ENCODE measurements at regions of chr3 and their contacts with region 1.

Region 1: GRCh38 chr3:107543666-107544065 is 20.9 kb downstream of the BBX start:
- DNase-seq: no peak
- H3K4me3 ChIP-seq: no peak overlapping the region
- H3K27ac ChIP-seq: no peak overlapping the region
- H3K4me1 ChIP-seq: peaks cover 0 to 5% (median 3%) of the 10 kb centered on the region in 4 experiments; a peak in 2 of 7 replicates
- H3K27me3 ChIP-seq: no peaks in the 10 kb centered on the region
- CTCF ChIP-seq: peak in 2 of 3 experiments; percentile 20 to 25; a peak in 2 of 4 replicates
- EP300 ChIP-seq: no peak
- POLR2A ChIP-seq: no peak
- RAD21 ChIP-seq: peak; percentile 58 to 60

Region 2: GRCh38 chr3:107313711-107314110 is 230.0 kb before region 1 on chr3:
- CTCF ChIA-PET with region 1: no interaction called
- POLR2A ChIA-PET with region 1: no interaction called
- DNase-seq: no peak
- H3K4me3 ChIP-seq: no peak overlapping the region
- H3K27ac ChIP-seq: no peak overlapping the region
- H3K4me1 ChIP-seq: no peaks in the 10 kb centered on the region; a peak in 1 of 7 replicates
- H3K27me3 ChIP-seq: no peaks in the 10 kb centered on the region
- CTCF ChIP-seq: no peak
- EP300 ChIP-seq: no peak
- POLR2A ChIP-seq: no peak
- RAD21 ChIP-seq: no peak

Region 3: GRCh38 chr3:107384907-107385306 is 158.8 kb before region 1 on chr3:
- CTCF ChIA-PET with region 1: no interaction called
- POLR2A ChIA-PET with region 1: no interaction called
- DNase-seq: no peak
- H3K4me3 ChIP-seq: peak overlapping the region in 1 of 4 experiments; percentile 32; a peak in 1 of 8 replicates
- H3K27ac ChIP-seq: no peak overlapping the region
- H3K4me1 ChIP-seq: peaks cover 0 to 13% (median 6%) of the 10 kb centered on the region in 4 experiments; a peak in 5 of 7 replicates
- H3K27me3 ChIP-seq: peaks cover 0 to 1% (median 0%) of the 10 kb centered on the region in 4 experiments; a peak in 1 of 7 replicates
- CTCF ChIP-seq: no peak
- EP300 ChIP-seq: no peak
- POLR2A ChIP-seq: no peak
- RAD21 ChIP-seq: no peak

Region 4: GRCh38 chr3:107476462-107476861 is 67.2 kb before region 1 on chr3:
- CTCF ChIA-PET with region 1: no interaction called
- POLR2A ChIA-PET with region 1: no interaction called
- DNase-seq: no peak
- H3K4me3 ChIP-seq: no peak overlapping the region; a peak in 1 of 8 replicates
- H3K27ac ChIP-seq: no peak overlapping the region
- H3K4me1 ChIP-seq: no peaks in the 10 kb centered on the region; a peak in 1 of 7 replicates
- H3K27me3 ChIP-seq: peaks cover 0 to 1% (median 0%) of the 10 kb centered on the region in 4 experiments; a peak in 1 of 7 replicates
- CTCF ChIP-seq: no peak
- EP300 ChIP-seq: no peak
- POLR2A ChIP-seq: no peak
- RAD21 ChIP-seq: no peak

Region 5: GRCh38 chr3:107560166-107560565 is 16.5 kb after region 1 on chr3:
- CTCF ChIA-PET with region 1: interaction called, 11 read pairs
- POLR2A ChIA-PET with region 1: no interaction called
- DNase-seq: no peak
- H3K4me3 ChIP-seq: no peak overlapping the region
- H3K27ac ChIP-seq: no peak overlapping the region
- H3K4me1 ChIP-seq: no peaks in the 10 kb centered on the region
- H3K27me3 ChIP-seq: no peaks in the 10 kb centered on the region
- CTCF ChIP-seq: no peak
- EP300 ChIP-seq: no peak
- POLR2A ChIP-seq: no peak
- RAD21 ChIP-seq: no peak

Measured in H1 (cell line).